IMR-90 (cell line): ENCODE measurements at regions of chr17 and their contacts with region 1.

Region 1: GRCh38 chr17:64281962-64282727 is 19.1 kb upstream of the TEX2 start:
- DNase-seq: peak; percentile 83
- ATAC-seq: peak; percentile 88
- H3K4me3 ChIP-seq: no peak overlapping the region
- H3K27ac ChIP-seq: no peak overlapping the region
- H3K4me1 ChIP-seq: no peaks in the 10 kb centered on the region; the same call in 1 of the 2 replicates
- H3K27me3 ChIP-seq: peaks cover 7% of the 10 kb centered on the region
- CTCF ChIP-seq: peak; percentile 87
- POLR2A ChIP-seq: no peak
- RAD21 ChIP-seq: peak; percentile 92

Region 2: DNA sequence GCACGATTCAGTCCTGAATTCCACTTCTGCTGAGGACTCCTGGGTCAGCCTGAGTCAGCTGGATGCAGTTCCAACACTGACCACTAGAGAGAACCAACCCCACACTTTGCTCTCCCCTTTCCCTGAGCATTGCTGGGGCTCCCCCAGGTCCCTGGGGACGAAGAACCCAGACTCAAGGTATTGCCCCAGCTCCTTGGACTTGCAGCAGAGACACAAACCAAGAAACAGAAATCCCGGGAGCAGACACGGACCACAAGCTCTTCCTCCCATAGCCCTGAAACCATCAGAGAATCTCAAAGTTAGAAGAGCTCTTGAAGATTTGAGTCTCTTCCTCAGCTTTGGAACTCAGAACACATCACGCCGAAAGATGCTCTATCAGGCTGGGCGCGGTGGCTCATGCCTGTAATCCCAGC is 362.8 kb before region 1 on chr17:
- CTCF ChIA-PET with region 1: no interaction called
- POLR2A ChIA-PET with region 1: no interaction called
- dilution Hi-C with region 1: no loop called
- in situ Hi-C with region 1: loop called (anchors 10 kb)
- intact Hi-C with region 1: loop called (anchors 10 kb)
- DNase-seq: peak; percentile 51
- ATAC-seq: peak; percentile 100
- H3K4me3 ChIP-seq: no peak overlapping the region
- H3K27ac ChIP-seq: no peak overlapping the region
- H3K4me1 ChIP-seq: no peaks in the 10 kb centered on the region
- H3K27me3 ChIP-seq: peaks cover 27% of the 10 kb centered on the region
- CTCF ChIP-seq: peak; percentile 86
- POLR2A ChIP-seq: no peak
- RAD21 ChIP-seq: peak; percentile 88

Region 3: GRCh38 chr17:64025732-64026294 is 256.3 kb before region 1 on chr17:
- CTCF ChIA-PET with region 1: interaction called, 4 read pairs
- POLR2A ChIA-PET with region 1: no interaction called
- dilution Hi-C with region 1: no loop called
- in situ Hi-C with region 1: loop called (anchors 10 kb)
- intact Hi-C with region 1: loop called (anchors 1 kb)
- DNase-seq: peak; percentile 70
- ATAC-seq: peak; percentile 88
- H3K4me3 ChIP-seq: no peak overlapping the region
- H3K27ac ChIP-seq: no peak overlapping the region
- H3K4me1 ChIP-seq: 0 out of 2 replicates have a peak, but pooled peaks cover 2% of the 10 kb centered on the region
- H3K27me3 ChIP-seq: peaks cover 4% of the 10 kb centered on the region; the same call in 1 of the 2 replicates
- CTCF ChIP-seq: peak; percentile 86
- POLR2A ChIP-seq: no peak
- RAD21 ChIP-seq: peak; percentile 65

Region 4: DNA sequence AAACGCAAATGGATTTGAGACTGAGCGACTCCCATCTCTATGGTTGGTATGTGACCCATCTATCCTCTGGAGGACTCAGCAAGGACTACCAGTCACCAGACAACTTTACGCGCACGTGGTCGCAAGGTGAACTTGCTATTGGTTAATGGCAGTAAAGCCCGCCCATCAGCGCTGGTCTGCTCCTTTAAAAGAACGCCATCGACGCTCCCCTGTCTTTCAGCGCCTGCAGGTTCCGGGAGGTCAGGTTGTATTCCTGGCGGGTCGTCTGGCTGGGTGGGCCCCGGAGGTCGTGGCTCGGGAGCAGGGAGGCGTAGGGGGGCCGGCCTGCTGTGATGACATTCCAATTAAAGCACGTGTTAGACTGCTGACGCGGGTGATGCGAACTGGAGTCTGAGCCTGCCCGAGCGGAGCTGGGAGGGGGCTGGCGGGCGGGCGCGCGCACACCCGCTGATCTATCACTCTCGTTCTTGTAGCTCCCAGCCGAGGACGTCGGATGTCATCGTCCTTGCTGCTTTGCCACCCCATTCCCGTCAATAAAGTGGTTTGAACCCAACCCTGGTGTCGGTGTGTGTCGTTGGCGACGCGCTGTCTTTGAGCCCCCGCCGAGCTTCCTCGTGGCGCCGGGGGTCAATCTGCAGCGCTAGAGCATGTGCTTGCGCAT is 136.3 kb before region 1 on chr17:
- CTCF ChIA-PET with region 1: no interaction called
- POLR2A ChIA-PET with region 1: interaction called, 5 read pairs
- dilution Hi-C with region 1: no loop called
- in situ Hi-C with region 1: loop called (anchors 5 kb)
- intact Hi-C with region 1: loop called (anchors 1 kb)
- DNase-seq: peak; percentile 100
- ATAC-seq: peak; percentile 94
- H3K4me3 ChIP-seq: peak overlapping the region; percentile 56
- H3K27ac ChIP-seq: peak overlapping the region; percentile 75
- H3K4me1 ChIP-seq: peaks cover 5% of the 10 kb centered on the region
- H3K27me3 ChIP-seq: no peaks in the 10 kb centered on the region
- CTCF ChIP-seq: no peak
- POLR2A ChIP-seq: peak; percentile 99
- RAD21 ChIP-seq: no peak

Region 5: GRCh38 chr17:64230795-64231408 is 51.2 kb before region 1 on chr17:
- CTCF ChIA-PET with region 1: interaction called, 3 read pairs
- POLR2A ChIA-PET with region 1: no interaction called
- dilution Hi-C with region 1: no loop called
- in situ Hi-C with region 1: no loop called
- intact Hi-C with region 1: loop called (anchors 2 kb)
- DNase-seq: peak; percentile 97
- ATAC-seq: peak; percentile 94
- H3K4me3 ChIP-seq: no peak overlapping the region
- H3K27ac ChIP-seq: peak overlapping the region; percentile 96
- H3K4me1 ChIP-seq: peaks cover 14% of the 10 kb centered on the region
- H3K27me3 ChIP-seq: no peaks in the 10 kb centered on the region
- CTCF ChIP-seq: no peak
- POLR2A ChIP-seq: no peak
- RAD21 ChIP-seq: no peak

Region 6: GRCh38 chr17:65029605-65030336 is 747.6 kb after region 1 on chr17:
- CTCF ChIA-PET with region 1: no interaction called
- POLR2A ChIA-PET with region 1: no interaction called
- dilution Hi-C with region 1: no loop called
- in situ Hi-C with region 1: no loop called
- intact Hi-C with region 1: no loop called
- DNase-seq: no peak
- ATAC-seq: no peak
- H3K4me3 ChIP-seq: no peak overlapping the region
- H3K27ac ChIP-seq: no peak overlapping the region
- H3K4me1 ChIP-seq: peaks cover 2% of the 10 kb centered on the region; the same call in 1 of the 2 replicates
- H3K27me3 ChIP-seq: no peaks in the 10 kb centered on the region
- CTCF ChIP-seq: no peak
- POLR2A ChIP-seq: no peak
- RAD21 ChIP-seq: no peak